ENCODE measurements at regions of chr2 and their contacts with region 1.

Region 1: DNA sequence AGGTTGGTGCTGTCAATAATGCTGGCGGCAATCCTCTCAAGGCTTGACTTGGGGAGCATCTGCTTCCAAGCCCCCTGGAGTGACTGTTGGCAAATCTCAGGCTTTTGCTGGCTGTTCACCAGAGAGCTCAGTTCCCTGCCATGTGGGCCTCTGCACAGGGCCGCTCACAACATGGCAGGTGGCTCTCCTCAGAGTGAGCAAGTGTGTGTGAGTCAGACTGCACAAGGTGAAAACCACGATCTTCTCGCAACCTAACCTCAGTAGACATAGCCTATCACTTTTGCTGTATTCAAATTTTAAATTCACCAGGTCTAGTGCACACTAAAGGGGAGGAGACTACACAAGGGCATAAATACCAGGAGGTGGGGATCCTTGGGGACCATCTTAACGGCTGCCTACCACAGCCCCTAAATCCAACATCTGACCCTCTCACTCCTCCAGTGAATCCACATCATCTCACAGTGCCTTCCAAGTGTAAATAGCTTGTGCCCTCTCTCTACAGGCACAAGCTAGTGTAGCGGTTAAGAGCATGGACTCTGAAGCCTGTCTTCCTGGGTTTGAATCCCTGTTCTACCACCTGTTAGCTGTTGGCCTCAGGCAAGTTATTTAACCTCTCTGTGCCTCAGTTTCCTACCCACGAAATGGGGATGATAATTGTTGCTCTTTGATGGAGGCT is 187.7 kb upstream of the CXCR4 start:
- DNase-seq: peak; percentile 84
- H3K4me3 Mint-ChIP-seq: peak overlapping the region; percentile 33
- H3K27ac Mint-ChIP-seq: peak overlapping the region; percentile 72
- H3K4me1 Mint-ChIP-seq: peaks cover 34% of the 10 kb centered on the region
- H3K27me3 Mint-ChIP-seq: peaks cover 3% of the 10 kb centered on the region

Region 2: GRCh38 chr2:135913727-135914365 is 391.8 kb before region 1 on chr2:
- CTCF ChIA-PET with region 1: interaction called, 7 read pairs
- POLR2A ChIA-PET with region 1: no interaction called
- intact Hi-C with region 1: loop called (anchors 5 kb)
- DNase-seq: no peak
- H3K4me3 Mint-ChIP-seq: no peak overlapping the region
- H3K27ac Mint-ChIP-seq: no peak overlapping the region
- H3K4me1 Mint-ChIP-seq: peaks cover 14% of the 10 kb centered on the region
- H3K27me3 Mint-ChIP-seq: no peaks in the 10 kb centered on the region

Region 3: GRCh38 chr2:136008205-136008865 is 297.3 kb before region 1 on chr2:
- CTCF ChIA-PET with region 1: no interaction called
- POLR2A ChIA-PET with region 1: no interaction called
- intact Hi-C with region 1: loop called (anchors 5 kb)
- DNase-seq: peak; percentile 87
- H3K4me3 Mint-ChIP-seq: no peak overlapping the region
- H3K27ac Mint-ChIP-seq: peak overlapping the region; percentile 72
- H3K4me1 Mint-ChIP-seq: peaks cover 49% of the 10 kb centered on the region
- H3K27me3 Mint-ChIP-seq: no peaks in the 10 kb centered on the region

Region 4: GRCh38 chr2:136207030-136207623 is 98.5 kb before region 1 on chr2:
- CTCF ChIA-PET with region 1: interaction called, 3 read pairs
- POLR2A ChIA-PET with region 1: interaction called, 4 read pairs
- intact Hi-C with region 1: loop called (anchors 2 kb)
- DNase-seq: peak; percentile 65
- H3K4me3 Mint-ChIP-seq: peak overlapping the region; percentile 3
- H3K27ac Mint-ChIP-seq: peak overlapping the region; percentile 96
- H3K4me1 Mint-ChIP-seq: peaks cover 46% of the 10 kb centered on the region
- H3K27me3 Mint-ChIP-seq: no peaks in the 10 kb centered on the region

Region 5: DNA sequence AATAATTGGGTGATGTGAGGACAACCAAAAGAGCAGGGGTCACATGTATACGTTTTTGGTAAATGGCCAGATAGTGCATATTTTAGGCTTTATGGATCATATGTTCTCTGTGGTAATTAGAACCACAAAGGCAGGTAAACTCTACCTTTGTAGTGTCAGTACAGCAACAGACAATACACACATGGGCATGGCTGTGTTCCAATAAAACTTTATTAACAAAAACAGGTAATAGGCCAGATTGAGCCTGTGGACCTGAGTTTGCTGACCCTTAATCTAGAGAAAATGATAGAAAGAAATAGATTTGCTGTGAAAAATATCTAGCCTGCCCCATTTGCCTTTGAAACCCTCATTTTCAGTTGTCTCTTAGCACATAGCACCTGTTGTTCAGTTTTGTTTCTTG is 10.5 kb before region 1 on chr2:
- CTCF ChIA-PET with region 1: no interaction called
- POLR2A ChIA-PET with region 1: no interaction called
- intact Hi-C with region 1: loop called (anchors 1 kb)
- DNase-seq: no peak
- H3K4me3 Mint-ChIP-seq: no peak overlapping the region
- H3K27ac Mint-ChIP-seq: no peak overlapping the region
- H3K4me1 Mint-ChIP-seq: peaks cover 16% of the 10 kb centered on the region
- H3K27me3 Mint-ChIP-seq: no peaks in the 10 kb centered on the region

Region 6: DNA sequence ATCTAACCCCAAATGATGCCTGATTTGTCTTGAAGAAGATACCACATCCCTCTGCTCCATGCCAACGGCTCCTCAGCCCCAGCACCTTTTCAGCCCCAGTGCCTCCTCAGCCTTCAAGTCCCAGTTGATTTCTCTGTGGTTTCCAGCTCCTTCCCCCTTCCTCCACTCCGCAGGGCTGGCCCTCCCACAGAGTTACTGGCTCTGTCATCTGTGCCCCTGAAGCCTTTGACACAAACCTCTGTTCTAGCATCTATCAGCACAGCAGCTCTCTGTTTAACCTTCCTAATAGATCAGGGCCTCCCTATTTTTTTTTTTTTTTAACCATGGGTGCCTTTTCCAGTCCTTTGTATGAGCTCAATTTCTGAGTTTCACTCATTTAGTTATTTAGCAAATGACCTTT is 13.6 kb after region 1 on chr2:
- CTCF ChIA-PET with region 1: interaction called, 8 read pairs
- POLR2A ChIA-PET with region 1: interaction called, 16 read pairs
- intact Hi-C with region 1: no loop called
- DNase-seq: peak; percentile 72
- H3K4me3 Mint-ChIP-seq: no peak overlapping the region
- H3K27ac Mint-ChIP-seq: peak overlapping the region; percentile 85
- H3K4me1 Mint-ChIP-seq: peaks cover 60% of the 10 kb centered on the region
- H3K27me3 Mint-ChIP-seq: no peaks in the 10 kb centered on the region

Region 7: DNA sequence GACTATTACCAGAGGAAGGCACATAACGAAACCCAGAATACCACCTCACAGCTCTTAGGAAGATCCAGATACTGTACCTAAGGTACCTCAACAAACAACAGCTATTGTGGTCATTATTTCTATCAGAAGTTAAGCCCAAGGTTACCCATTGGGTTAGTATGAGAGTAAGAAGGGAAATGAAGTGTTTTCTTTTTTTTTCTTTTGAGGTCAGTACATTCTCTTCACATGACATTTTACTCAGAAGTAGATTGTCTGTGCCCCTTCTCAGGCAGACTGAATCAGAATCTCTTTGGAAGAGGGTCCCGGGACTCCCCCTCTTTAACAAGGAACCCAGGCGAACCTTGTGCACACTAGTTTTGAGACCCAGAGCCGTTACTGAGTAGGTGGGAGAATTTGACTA is 46.0 kb after region 1 on chr2:
- CTCF ChIA-PET with region 1: no interaction called
- POLR2A ChIA-PET with region 1: no interaction called
- intact Hi-C with region 1: loop called (anchors 2 kb)
- DNase-seq: peak; percentile 51
- H3K4me3 Mint-ChIP-seq: no peak overlapping the region
- H3K27ac Mint-ChIP-seq: peak overlapping the region; percentile 18
- H3K4me1 Mint-ChIP-seq: peaks cover 26% of the 10 kb centered on the region
- H3K27me3 Mint-ChIP-seq: no peaks in the 10 kb centered on the region